HCT116 (cell line): ENCODE measurements at regions of chr12 and their contacts with region 1.

Region 1: DNA sequence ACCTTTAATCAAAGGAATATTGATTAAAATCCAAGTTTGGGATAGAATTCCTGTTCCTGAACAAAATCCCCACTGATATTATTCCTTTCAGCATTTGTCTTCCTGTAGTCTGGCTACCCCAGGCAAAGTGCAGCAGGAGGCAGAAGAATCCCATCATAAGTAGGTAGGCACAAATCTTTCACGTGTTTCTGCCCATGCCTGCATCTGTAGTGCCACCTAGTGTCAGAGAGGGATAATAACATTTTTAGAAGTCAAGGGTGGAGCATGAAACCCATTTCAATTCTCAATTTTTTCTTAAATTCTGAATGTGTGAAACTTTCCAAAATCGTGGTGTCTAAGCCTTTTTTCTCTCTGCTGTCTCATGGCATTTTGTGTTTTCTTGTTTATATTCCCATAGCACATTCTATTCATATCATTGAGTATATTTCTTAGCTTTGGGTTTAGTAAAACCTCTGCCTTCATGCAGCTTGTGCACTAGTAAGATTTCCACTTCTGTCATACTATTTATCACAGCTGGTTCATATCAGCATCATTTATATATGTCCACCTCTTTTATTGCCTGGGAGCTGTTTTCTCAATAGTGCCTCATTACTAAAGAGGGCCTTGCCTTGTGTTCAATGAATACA is 47.8 kb upstream of the RERG start:
- DNase-seq: peak; percentile 62
- ATAC-seq: peak; percentile 86
- H3K4me3 ChIP-seq: no peak overlapping the region
- H3K27ac ChIP-seq: no peak overlapping the region
- H3K4me1 ChIP-seq: no peaks in the 10 kb centered on the region
- H3K27me3 ChIP-seq: no peaks in the 10 kb centered on the region
- CTCF ChIP-seq: peak; percentile 79 to 94 (median 84)
- POLR2A ChIP-seq: no peak
- RAD21 ChIP-seq: peak; percentile 86

Region 2: DNA sequence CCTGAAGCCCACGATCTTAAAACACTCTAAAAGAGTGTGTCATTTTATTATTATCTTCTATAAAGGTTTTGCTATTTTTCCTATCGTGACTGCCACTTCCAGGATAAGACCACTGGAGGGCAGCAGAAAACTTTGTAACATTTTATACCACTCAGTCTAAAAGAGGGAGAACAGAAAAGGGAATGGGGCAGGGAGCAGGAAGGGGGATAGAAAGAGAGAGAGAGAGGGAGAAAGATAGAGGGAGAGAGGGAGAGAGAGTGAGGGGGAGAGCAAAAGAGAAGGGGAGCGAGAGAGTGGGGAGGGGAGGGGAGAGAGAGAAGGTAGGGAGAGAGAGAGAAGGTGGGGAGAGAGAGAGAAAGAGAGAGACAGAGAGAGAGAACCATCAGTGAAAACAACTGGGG is 423.7 kb before region 1 on chr12:
- CTCF ChIA-PET with region 1: no interaction called
- POLR2A ChIA-PET with region 1: no interaction called
- RAD21 ChIA-PET with region 1: no interaction called
- intact Hi-C with region 1: loop called (anchors 5 kb)
- DNase-seq: peak; percentile 37
- ATAC-seq: peak; percentile 87
- H3K4me3 ChIP-seq: no peak overlapping the region
- H3K27ac ChIP-seq: no peak overlapping the region
- H3K4me1 ChIP-seq: peaks cover 0 to 10% of the 10 kb centered on the region in 2 experiments; a peak in 2 of 4 replicates
- H3K27me3 ChIP-seq: no peaks in the 10 kb centered on the region
- CTCF ChIP-seq: peak; percentile 67 to 86 (median 84)
- POLR2A ChIP-seq: no peak
- RAD21 ChIP-seq: peak; percentile 87

Region 3: GRCh38 chr12:15151161-15152120 is 117.6 kb before region 1 on chr12:
- CTCF ChIA-PET with region 1: interaction called, 3 read pairs
- POLR2A ChIA-PET with region 1: no interaction called
- RAD21 ChIA-PET with region 1: no interaction called
- intact Hi-C with region 1: loop called (anchors 2 kb)
- DNase-seq: peak; percentile 6
- ATAC-seq: 0 out of 2 replicates have a peak, but pooled peaks have one; percentile 46
- H3K4me3 ChIP-seq: no peak overlapping the region
- H3K27ac ChIP-seq: no peak overlapping the region
- H3K4me1 ChIP-seq: no peaks in the 10 kb centered on the region
- H3K27me3 ChIP-seq: peaks cover 69% of the 10 kb centered on the region
- CTCF ChIP-seq: peak; percentile 34 to 62 (median 46); a peak in 3 of 6 replicates
- POLR2A ChIP-seq: no peak
- RAD21 ChIP-seq: peak; percentile 51

Region 4: GRCh38 chr12:15227004-15227679 is 41.9 kb before region 1 on chr12:
- CTCF ChIA-PET with region 1: interaction called, 4 read pairs
- POLR2A ChIA-PET with region 1: no interaction called
- RAD21 ChIA-PET with region 1: no interaction called
- intact Hi-C with region 1: loop called (anchors 2 kb)
- DNase-seq: peak; percentile 42
- ATAC-seq: peak; percentile 81
- H3K4me3 ChIP-seq: no peak overlapping the region
- H3K27ac ChIP-seq: no peak overlapping the region
- H3K4me1 ChIP-seq: no peaks in the 10 kb centered on the region
- H3K27me3 ChIP-seq: peaks cover 26% of the 10 kb centered on the region; the same call in 1 of the 2 replicates
- CTCF ChIP-seq: peak; percentile 62 to 79 (median 67)
- POLR2A ChIP-seq: no peak
- RAD21 ChIP-seq: peak; percentile 49